CD8-positive, alpha-beta T cell (primary cell): ENCODE measurements at regions of chr11 and their contacts with region 1.

Region 1: DNA sequence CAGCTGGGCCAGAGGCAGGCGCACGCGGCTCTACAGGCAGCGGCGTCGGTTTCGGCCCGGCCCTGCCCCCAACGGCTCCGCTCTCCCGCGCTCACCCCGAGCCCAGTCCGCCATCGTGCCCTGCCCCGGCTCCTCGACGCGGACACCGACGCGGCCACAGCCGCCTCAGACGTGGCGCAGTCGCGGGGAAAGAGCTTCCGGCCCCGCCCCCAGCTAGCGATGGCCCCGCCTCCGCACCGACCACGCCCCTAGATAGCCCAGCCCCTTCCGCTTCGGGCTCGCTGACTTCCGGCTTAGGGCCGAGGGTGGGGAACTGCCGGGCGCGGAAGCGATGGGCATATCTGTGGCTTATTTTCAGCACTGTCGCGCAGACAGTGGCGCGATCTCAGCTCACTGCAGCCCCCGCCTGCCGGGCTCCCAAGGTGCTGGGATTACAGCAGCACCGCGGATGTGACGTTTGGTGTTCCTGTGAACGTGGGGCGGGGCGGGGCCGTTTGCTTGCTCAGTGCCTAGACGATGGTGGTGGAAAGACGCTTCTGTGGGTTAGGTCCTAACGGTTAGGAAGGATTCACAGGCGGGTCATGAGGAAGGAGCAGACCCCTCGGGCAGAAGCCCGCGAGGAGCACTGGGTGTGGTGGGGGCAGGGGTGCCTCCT is at the starts of genes BET1L and RIC8A:
- DNase-seq: peak; percentile 93 to 100 (median 97)
- ATAC-seq: peak; percentile 76
- H3K4me3 ChIP-seq: peak within 1 kb of the TSS; percentile 83 to 89
- H3K4me3 Mint-ChIP-seq: peak within 1 kb of the TSS; percentile 99
- H3K27ac ChIP-seq: peak within 1 kb of the TSS; percentile 91 to 97
- H3K27ac Mint-ChIP-seq: peak within 1 kb of the TSS; percentile 100
- H3K4me1 ChIP-seq: peaks cover 54% of the 10 kb centered on the region
- H3K4me1 Mint-ChIP-seq: peaks cover 58% of the 10 kb centered on the region
- H3K27me3 ChIP-seq: no peaks in the 10 kb centered on the region
- H3K27me3 Mint-ChIP-seq: no peaks in the 10 kb centered on the region
- CTCF ChIP-seq: no peak
- total RNA-seq, gene BET1L: 58.0 to 60.9 TPM
- total RNA-seq, gene RIC8A: 165 to 176 TPM

Region 2: DNA sequence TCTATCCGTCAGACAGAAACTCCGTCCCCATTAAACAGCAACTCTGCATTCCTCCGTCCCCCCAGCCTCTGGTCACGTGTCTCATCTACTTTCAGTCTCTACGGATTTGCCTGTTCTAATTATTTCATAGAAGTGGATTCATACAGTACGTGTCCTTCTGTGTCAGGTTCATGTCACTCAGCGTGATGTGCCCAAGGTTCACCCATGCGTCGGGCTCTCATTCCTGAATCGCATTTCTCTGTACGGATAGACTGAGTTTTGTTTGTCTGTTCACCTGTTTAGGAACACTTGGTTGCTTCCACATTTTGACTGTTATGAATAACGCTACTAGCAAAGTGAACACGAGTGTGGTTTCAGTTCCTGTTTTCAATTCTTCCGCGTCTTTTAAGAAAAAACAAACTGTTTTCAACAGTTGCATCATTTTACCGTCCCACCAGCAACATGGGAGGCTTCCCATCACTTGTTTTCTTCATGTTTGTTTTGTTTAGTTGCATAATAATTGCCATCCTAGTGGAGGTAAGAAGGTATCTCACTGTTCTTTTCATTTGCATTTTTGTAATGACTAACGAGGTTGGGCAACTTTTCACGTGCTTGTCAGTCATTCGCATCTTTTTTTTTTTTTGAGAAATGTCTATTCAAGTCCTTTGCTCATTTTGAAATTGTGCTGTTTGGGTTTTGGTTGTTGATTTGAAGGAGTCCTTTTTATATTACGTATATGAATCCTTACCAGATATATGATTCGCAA is 62.0 kb after region 1 on chr11:
- CTCF ChIA-PET with region 1: interaction called, 3 read pairs
- POLR2A ChIA-PET with region 1: interaction called, 18 read pairs
- intact Hi-C with region 1: loop called (anchors 1 to 5 kb)
- DNase-seq: peak in 5 of 9 experiments; percentile 60 to 90 (median 77)
- ATAC-seq: peak; percentile 69
- H3K4me3 ChIP-seq: peak overlapping the region; percentile 38 to 60
- H3K4me3 Mint-ChIP-seq: peak overlapping the region; percentile 85
- H3K27ac ChIP-seq: peak overlapping the region; percentile 76 to 96
- H3K27ac Mint-ChIP-seq: peak overlapping the region; percentile 98
- H3K4me1 ChIP-seq: peaks cover 23% of the 10 kb centered on the region
- H3K4me1 Mint-ChIP-seq: peaks cover 30% of the 10 kb centered on the region
- H3K27me3 ChIP-seq: no peaks in the 10 kb centered on the region
- H3K27me3 Mint-ChIP-seq: no peaks in the 10 kb centered on the region
- CTCF ChIP-seq: no peak

Region 3: GRCh38 chr11:313787-314547 is 106.6 kb after region 1 on chr11 and contains the start of gene IFITM1:
- CTCF ChIA-PET with region 1: interaction called, 3 read pairs
- POLR2A ChIA-PET with region 1: interaction called, 11 read pairs
- intact Hi-C with region 1: no loop called
- DNase-seq: peak in 7 of 9 experiments; percentile 54 to 86 (median 71)
- ATAC-seq: peak; percentile 49
- H3K4me3 ChIP-seq: peak within 1 kb of the TSS; percentile 95 to 97
- H3K4me3 Mint-ChIP-seq: peak within 1 kb of the TSS; percentile 95
- H3K27ac ChIP-seq: peak within 1 kb of the TSS; percentile 83 to 88
- H3K27ac Mint-ChIP-seq: peak within 1 kb of the TSS; percentile 98
- H3K4me1 ChIP-seq: peaks cover 18% of the 10 kb centered on the region
- H3K4me1 Mint-ChIP-seq: peaks cover 45% of the 10 kb centered on the region
- H3K27me3 ChIP-seq: no peaks in the 10 kb centered on the region
- H3K27me3 Mint-ChIP-seq: no peaks in the 10 kb centered on the region
- CTCF ChIP-seq: no peak
- total RNA-seq, gene IFITM1: 223 to 251 TPM

Region 4: DNA sequence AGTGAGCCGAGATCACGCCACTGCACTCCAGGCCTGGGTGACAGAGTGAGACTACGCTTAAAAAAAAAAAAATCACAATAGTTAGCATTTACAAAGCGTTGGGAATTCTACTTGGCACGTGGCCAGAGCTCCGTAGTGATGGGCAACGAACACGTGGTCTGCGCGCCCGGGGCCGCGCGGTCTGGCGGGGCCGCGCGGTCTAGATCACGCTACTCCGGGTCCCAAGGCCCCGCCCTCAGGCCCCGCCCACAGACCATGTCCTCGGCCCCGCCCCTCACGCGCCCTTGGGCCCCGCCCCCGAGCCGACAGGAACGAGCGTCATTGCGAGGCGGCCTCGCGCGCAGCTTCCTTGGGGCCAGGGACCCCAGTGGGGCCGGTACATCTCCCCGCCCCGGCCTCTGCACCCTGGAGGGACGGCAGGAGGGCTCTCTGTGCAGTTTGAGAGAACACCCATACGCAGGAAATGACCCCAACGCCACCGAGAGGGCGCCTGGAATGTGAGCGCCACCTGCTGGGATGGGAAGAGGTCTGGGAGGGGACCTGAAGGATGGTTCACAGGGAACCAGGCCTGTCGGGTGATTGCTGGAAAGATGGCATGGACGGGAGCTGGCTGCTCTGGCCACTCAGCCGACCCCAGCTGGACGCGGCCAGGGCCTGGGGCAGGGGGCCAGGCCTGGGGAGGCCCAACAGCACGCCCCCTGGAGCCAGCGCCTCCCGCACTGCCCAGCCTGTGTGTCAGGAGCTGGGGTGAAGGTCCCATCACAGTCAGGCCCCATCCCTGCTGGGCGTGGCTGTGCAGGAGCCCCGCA is 240.8 kb after region 1 on chr11:
- CTCF ChIA-PET with region 1: no interaction called
- POLR2A ChIA-PET with region 1: interaction called, 6 read pairs
- intact Hi-C with region 1: loop called (anchors 1 kb)
- DNase-seq: peak; percentile 92 to 97 (median 94)
- ATAC-seq: peak; percentile 74
- H3K4me3 ChIP-seq: peak overlapping the region; percentile 43 to 69
- H3K4me3 Mint-ChIP-seq: peak overlapping the region; percentile 86
- H3K27ac ChIP-seq: peak overlapping the region; percentile 73 to 94
- H3K27ac Mint-ChIP-seq: peak overlapping the region; percentile 94
- H3K4me1 ChIP-seq: peaks cover 29% of the 10 kb centered on the region
- H3K4me1 Mint-ChIP-seq: peaks cover 19% of the 10 kb centered on the region
- H3K27me3 ChIP-seq: peaks cover 0 to 2% of the 10 kb centered on the region in 2 experiments
- H3K27me3 Mint-ChIP-seq: no peaks in the 10 kb centered on the region
- CTCF ChIP-seq: peak; percentile 68

Region 5: GRCh38 chr11:695538-696248 is 488.4 kb after region 1 on chr11 and contains the start of gene TMEM80:
- CTCF ChIA-PET with region 1: no interaction called
- POLR2A ChIA-PET with region 1: no interaction called
- intact Hi-C with region 1: loop called in 1 of 2 experiments (anchors 5 kb)
- DNase-seq: peak; percentile 94 to 99 (median 97)
- ATAC-seq: peak; percentile 57
- H3K4me3 ChIP-seq: peak within 1 kb of the TSS; percentile 98
- H3K4me3 Mint-ChIP-seq: peak within 1 kb of the TSS; percentile 86
- H3K27ac ChIP-seq: peak within 1 kb of the TSS; percentile 94 to 100
- H3K27ac Mint-ChIP-seq: peak within 1 kb of the TSS; percentile 96
- H3K4me1 ChIP-seq: peaks cover 53% of the 10 kb centered on the region
- H3K4me1 Mint-ChIP-seq: peaks cover 55% of the 10 kb centered on the region
- H3K27me3 ChIP-seq: no peaks in the 10 kb centered on the region
- H3K27me3 Mint-ChIP-seq: no peaks in the 10 kb centered on the region
- CTCF ChIP-seq: no peak
- total RNA-seq, gene TMEM80: 24.8 to 25.2 TPM